ENCODE measurements at regions of chr14 and their contacts with region 1.

Region 1: DNA sequence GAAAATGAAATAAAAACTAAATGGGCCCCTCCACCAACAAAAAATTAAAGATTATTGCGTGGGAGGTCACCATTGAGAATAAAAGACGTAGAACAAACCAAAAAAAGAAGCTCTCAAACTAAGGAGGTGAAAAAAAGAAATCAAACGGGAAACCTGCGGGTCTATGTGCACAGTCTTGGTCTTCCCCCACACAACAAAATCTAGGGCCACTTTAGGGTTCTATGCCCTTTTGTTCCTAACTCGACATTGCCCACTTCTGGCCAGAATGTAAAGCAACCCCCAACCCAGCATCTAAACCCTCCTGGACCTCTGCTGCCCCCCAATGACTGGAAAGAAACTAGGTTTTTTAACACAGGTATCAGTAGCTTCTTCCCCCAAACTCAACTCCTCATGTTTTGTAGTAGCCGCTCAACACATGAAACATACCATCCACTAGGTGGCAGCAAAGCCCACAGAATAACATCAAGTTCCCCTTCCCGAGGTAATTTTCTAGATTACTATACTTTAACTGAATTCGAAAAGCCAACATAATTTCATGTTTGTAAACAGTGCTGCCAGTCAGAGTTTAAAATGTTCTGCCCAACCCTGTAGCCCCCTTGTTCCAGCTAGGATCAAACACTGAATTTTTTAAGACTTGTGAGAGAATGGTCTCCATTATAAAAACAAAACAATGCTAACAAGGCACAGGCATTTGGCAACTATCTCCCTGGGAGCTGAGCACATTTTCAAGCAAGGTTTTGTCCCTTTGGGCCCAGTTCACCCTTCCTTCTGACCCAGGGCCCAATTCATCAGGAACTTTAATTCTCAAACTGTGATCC is 18.7 kb downstream of the DAD1 start:
- DNase-seq: peak; percentile 70 to 97 (median 93)
- H3K4me3 ChIP-seq: peak overlapping the region; percentile 40
- H3K4me3 Mint-ChIP-seq: peak overlapping the region; percentile 55 to 88 (median 83)
- H3K27ac ChIP-seq: peak overlapping the region; percentile 55
- H3K27ac Mint-ChIP-seq: peak overlapping the region; percentile 89 to 99 (median 98)
- H3K4me1 ChIP-seq: peaks cover 49% of the 10 kb centered on the region
- H3K4me1 Mint-ChIP-seq: peaks cover 52 to 59% (median 59%) of the 10 kb centered on the region in 3 donors
- H3K27me3 ChIP-seq: no peaks in the 10 kb centered on the region
- H3K27me3 Mint-ChIP-seq: no peaks in the 10 kb centered on the region

Region 2: GRCh38 chr14:21852061-21852664 is 718.2 kb before region 1 on chr14:
- CTCF ChIA-PET with region 1: interaction called, 11 read pairs
- POLR2A ChIA-PET with region 1: no interaction called
- DNase-seq: peak; percentile 31 to 71 (median 43)
- H3K4me3 ChIP-seq: peak overlapping the region; percentile 50
- H3K4me3 Mint-ChIP-seq: peak overlapping the region; percentile 66 to 90 (median 82)
- H3K27ac ChIP-seq: no peak overlapping the region
- H3K27ac Mint-ChIP-seq: peak overlapping the region; percentile 20 to 83 (median 78)
- H3K4me1 ChIP-seq: no peaks in the 10 kb centered on the region
- H3K4me1 Mint-ChIP-seq: peaks cover 4 to 11% (median 6%) of the 10 kb centered on the region in 3 donors
- H3K27me3 ChIP-seq: no peaks in the 10 kb centered on the region
- H3K27me3 Mint-ChIP-seq: peaks cover 6 to 22% of the 10 kb centered on the region in 2 donors

Region 3: DNA sequence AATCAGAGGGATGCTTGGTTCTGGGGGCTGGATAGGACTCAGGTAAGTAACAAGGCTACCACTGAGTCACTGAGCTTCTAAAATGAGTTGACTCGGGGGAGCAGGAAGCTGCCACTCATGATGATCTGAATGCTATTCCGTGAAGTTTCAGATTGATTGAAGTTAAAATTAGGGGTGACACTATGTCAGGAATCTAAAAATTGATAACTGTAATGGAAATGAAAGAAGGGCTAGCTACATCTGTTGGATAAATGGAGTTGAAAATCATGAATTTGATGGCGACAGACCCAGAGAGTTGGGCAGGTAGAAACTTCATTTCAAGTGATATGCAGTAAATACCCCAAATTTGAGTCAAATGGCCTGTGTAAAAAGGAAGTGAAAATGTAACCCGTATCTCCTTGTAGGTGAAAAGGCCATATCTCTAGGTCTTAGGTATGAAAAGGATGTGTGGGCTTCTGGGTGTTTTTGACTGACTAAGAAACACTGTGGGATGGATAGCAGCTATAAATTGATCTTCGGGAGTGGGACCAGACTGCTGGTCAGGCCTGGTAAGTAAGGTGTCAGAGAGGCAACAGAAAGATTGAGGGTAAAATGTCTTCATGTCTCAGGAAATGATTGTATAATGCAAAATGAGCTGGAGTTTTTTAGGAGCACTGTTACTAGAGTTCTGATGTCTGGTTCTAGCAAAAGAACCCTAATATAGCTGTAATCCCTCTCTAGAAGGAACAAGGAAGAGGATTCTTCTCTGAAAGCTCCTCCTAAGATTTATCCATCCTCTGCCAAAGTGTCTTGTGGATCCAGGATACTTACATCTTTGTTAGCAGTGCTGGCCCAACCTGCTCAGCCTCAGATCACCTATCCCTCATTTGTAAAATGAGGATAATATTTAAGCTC is 38.6 kb before region 1 on chr14:
- CTCF ChIA-PET with region 1: interaction called, 38 read pairs
- POLR2A ChIA-PET with region 1: interaction called, 3 read pairs
- DNase-seq: peak in 1 of 5 donors; percentile 59
- H3K4me3 ChIP-seq: peak overlapping the region; percentile 61
- H3K4me3 Mint-ChIP-seq: peak overlapping the region; percentile 81 to 93 (median 83)
- H3K27ac ChIP-seq: peak overlapping the region; percentile 45
- H3K27ac Mint-ChIP-seq: peak overlapping the region; percentile 89 to 99 (median 96)
- H3K4me1 ChIP-seq: peaks cover 93% of the 10 kb centered on the region
- H3K4me1 Mint-ChIP-seq: peaks cover 92 to 98% (median 98%) of the 10 kb centered on the region in 3 donors
- H3K27me3 ChIP-seq: no peaks in the 10 kb centered on the region
- H3K27me3 Mint-ChIP-seq: no peaks in the 10 kb centered on the region

Region 4: DNA sequence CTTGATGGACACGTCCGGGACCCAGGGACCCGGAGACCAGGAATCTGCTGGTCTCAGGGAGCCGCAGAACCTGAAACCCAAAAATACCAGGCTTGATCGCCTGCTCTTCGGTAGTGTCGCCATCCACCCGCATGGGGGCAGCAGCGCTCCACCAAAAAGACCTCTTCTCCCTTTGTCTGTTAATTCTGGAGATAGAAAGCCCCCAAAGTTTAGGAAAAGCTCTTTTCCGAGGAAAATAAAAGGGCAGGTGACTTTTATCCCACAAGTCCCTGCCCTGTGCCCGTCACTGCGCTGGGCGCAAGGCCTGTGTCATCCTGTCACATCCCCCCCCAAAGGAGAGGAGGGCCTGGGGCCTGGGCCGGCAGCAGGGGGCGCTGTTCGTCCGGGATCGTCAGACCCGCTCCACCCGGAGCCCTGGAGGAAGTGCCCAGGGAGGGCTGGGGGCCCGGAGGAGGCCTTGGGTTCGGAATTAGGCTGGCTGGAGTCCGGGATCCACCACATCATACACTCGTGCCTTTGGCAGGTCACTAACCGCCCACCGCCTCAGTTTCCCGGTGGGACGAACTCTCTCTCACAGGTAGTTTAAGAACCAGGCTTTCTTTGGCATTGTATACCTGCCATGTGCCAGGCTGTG is 13.2 kb before region 1 on chr14:
- CTCF ChIA-PET with region 1: interaction called, 338 read pairs
- POLR2A ChIA-PET with region 1: interaction called, 84 read pairs
- DNase-seq: peak; percentile 84 to 94 (median 90)
- H3K4me3 ChIP-seq: peak overlapping the region; percentile 69
- H3K4me3 Mint-ChIP-seq: peak overlapping the region; percentile 84 to 94 (median 89)
- H3K27ac ChIP-seq: peak overlapping the region; percentile 92
- H3K27ac Mint-ChIP-seq: peak overlapping the region; percentile 98 to 100 (median 99)
- H3K4me1 ChIP-seq: peaks cover 91% of the 10 kb centered on the region
- H3K4me1 Mint-ChIP-seq: peaks cover 88 to 97% (median 96%) of the 10 kb centered on the region in 3 donors
- H3K27me3 ChIP-seq: no peaks in the 10 kb centered on the region
- H3K27me3 Mint-ChIP-seq: peaks cover 0 to 8% of the 10 kb centered on the region in 2 donors

Region 5: DNA sequence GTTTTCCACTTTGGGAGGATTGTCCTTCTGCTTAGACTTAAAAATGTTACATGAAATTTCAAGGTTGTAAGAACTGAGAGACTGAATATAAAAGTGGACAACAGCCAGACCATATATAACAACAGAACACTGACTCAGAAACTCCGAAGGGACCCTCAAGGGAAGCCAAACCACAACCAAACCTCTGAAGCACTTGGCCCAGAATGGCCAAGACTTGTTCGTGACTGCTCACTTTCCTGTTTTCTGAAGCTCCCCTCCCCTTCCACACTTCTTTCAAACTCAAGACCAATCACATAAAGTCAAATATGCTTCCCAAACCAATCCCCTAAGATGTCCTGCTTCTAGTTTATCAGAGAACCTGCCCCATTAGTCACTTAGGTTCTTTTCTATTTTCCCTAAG is 60.1 kb after region 1 on chr14:
- CTCF ChIA-PET with region 1: no interaction called
- POLR2A ChIA-PET with region 1: no interaction called
- DNase-seq: no peak
- H3K4me3 ChIP-seq: no peak overlapping the region
- H3K4me3 Mint-ChIP-seq: no peak overlapping the region
- H3K27ac ChIP-seq: no peak overlapping the region
- H3K27ac Mint-ChIP-seq: peak overlapping the region in 1 of 8 donors; percentile 41
- H3K4me1 ChIP-seq: no peaks in the 10 kb centered on the region
- H3K4me1 Mint-ChIP-seq: no peaks in the 10 kb centered on the region
- H3K27me3 ChIP-seq: no peaks in the 10 kb centered on the region
- H3K27me3 Mint-ChIP-seq: peaks cover 15 to 40% of the 10 kb centered on the region in 2 donors

Region 6: DNA sequence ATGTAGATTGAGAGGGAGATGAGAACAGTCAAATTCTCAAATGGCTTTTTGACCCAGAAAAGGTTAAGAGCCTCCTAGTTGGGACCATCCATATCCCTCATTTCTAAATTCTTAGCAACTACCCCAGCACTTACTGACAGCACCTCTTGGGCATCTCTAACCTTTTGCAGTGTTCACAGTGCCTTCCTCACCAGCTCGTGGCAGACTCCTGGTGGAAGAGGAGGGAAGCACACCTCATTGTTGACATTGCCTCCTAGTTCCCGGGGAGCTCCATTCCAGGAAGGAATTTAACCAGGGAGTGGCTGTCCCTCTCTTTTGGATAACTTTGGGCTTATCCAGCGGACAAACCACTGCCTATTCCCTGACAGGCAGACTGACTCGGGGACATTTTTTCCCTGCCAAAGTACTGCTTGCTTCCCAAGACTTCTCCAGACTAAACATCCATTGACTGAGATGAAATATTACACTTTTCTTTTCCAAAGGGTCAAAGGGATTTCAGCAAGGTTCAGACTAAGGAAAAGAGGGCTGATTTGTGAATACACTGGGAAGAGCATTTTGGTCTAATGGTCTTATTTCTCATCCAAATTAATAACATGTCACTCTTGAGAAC is 82.8 kb after region 1 on chr14:
- CTCF ChIA-PET with region 1: interaction called, 37 read pairs
- POLR2A ChIA-PET with region 1: interaction called, 3 read pairs
- DNase-seq: peak; percentile 23 to 66 (median 35)
- H3K4me3 ChIP-seq: no peak overlapping the region
- H3K4me3 Mint-ChIP-seq: no peak overlapping the region
- H3K27ac ChIP-seq: no peak overlapping the region
- H3K27ac Mint-ChIP-seq: peak overlapping the region in 3 of 8 donors; percentile 53 to 75 (median 55)
- H3K4me1 ChIP-seq: no peaks in the 10 kb centered on the region
- H3K4me1 Mint-ChIP-seq: no peaks in the 10 kb centered on the region
- H3K27me3 ChIP-seq: no peaks in the 10 kb centered on the region
- H3K27me3 Mint-ChIP-seq: peaks cover 0 to 1% of the 10 kb centered on the region in 2 donors

Region 7: DNA sequence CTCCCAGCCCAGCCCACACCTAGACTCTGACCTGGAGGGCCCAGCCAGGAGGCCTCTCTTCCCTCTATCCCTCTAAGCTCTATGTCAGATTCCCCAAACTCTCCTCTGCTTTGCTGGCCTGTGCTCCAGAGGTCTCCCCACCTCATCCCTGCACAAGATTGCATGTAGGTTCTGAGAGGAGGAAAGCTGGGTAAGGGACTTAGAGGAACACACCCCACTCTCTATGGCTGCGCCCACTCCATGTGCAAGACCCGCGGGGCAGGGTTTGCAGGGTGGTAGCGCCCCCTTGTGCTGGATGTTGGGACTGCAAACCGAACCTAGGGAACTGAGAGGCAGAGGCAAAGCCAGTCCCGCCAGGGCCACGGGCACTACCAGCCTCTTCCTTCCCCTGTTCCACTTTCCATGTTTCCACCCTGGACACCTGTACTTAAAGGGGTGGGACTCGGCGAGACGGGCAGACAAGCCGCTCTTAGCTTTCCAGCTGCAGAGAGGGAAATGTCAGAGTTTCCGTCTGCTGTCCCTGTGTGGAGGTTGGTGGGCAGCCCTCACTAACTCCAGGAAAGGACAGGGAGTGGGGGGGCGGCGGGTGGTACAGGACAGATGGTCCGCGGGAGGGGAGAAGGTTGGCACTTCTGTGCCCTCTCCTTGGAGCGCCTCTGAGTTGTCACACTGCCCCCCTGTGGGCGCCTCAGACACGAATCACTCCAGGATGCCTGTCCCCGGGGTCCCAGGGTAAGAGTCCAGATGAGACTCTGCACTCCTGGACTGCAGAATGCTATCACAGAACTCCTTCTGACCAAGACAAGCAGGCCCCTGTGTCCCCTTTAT is 282.8 kb after region 1 on chr14:
- CTCF ChIA-PET with region 1: interaction called, 55 read pairs
- POLR2A ChIA-PET with region 1: interaction called, 4 read pairs
- DNase-seq: peak; percentile 79 to 91 (median 84)
- H3K4me3 ChIP-seq: peak overlapping the region; percentile 90
- H3K4me3 Mint-ChIP-seq: peak overlapping the region; percentile 25 to 87 (median 82)
- H3K27ac ChIP-seq: peak overlapping the region; percentile 67
- H3K27ac Mint-ChIP-seq: peak overlapping the region in 5 of 8 donors; percentile 18 to 95 (median 72)
- H3K4me1 ChIP-seq: peaks cover 15% of the 10 kb centered on the region
- H3K4me1 Mint-ChIP-seq: peaks cover 7 to 19% (median 16%) of the 10 kb centered on the region in 3 donors
- H3K27me3 ChIP-seq: peaks cover 6% of the 10 kb centered on the region
- H3K27me3 Mint-ChIP-seq: peaks cover 6 to 24% of the 10 kb centered on the region in 2 donors

Region 8: GRCh38 chr14:23034483-23035302 is 464.4 kb after region 1 on chr14 and contains the start of gene PSMB5:
- CTCF ChIA-PET with region 1: no interaction called
- POLR2A ChIA-PET with region 1: interaction called, 12 read pairs
- DNase-seq: peak; percentile 75 to 93 (median 90)
- H3K4me3 ChIP-seq: peak within 1 kb of the TSS; percentile 80
- H3K4me3 Mint-ChIP-seq: peak within 1 kb of the TSS; percentile 83 to 98 (median 89)
- H3K27ac ChIP-seq: peak within 1 kb of the TSS; percentile 90
- H3K27ac Mint-ChIP-seq: peak within 1 kb of the TSS; percentile 92 to 100 (median 98)
- H3K4me1 ChIP-seq: peaks cover 19% of the 10 kb centered on the region
- H3K4me1 Mint-ChIP-seq: peaks cover 27 to 36% (median 35%) of the 10 kb centered on the region in 3 donors
- H3K27me3 ChIP-seq: no peaks in the 10 kb centered on the region
- H3K27me3 Mint-ChIP-seq: peaks cover 0 to 1% of the 10 kb centered on the region in 2 donors
- total RNA-seq, gene PSMB5: 186 to 198 TPM

Measured in CD8-positive, alpha-beta memory T cell (primary cell).